Natural killer cell (primary cell): ENCODE measurements at regions of chr4 and their contacts with region 1.

Region 1: DNA sequence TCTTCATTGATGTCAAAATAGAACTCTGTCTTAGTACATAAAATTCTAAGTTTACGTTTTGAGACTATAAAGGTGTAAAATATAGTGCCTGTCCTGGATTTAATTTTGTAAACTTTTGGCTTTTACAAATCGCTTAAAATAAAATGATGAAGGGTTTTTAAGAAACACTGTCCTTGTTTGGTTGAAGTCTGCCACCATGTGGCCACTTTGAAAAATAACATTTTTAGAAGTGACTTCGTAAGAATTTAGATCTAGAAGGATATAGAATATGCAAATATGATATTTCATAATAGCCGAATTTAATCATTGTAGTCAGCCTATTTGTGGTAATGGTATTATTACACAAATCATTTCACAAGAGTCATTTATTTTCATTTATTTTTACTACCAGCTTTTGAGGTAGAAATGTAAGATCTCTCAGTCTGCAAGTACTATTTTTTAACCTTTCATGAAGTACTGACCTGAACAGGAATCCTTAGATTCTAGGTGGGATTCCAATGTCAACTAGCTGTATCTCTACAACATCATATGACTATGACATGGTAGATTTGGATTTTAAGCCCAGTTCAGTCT is 31.0 kb upstream of the FAT4 start:
- DNase-seq: peak in 1 of 2 donors; percentile 5
- ATAC-seq: no peak
- H3K4me3 ChIP-seq: no peak overlapping the region
- H3K4me3 Mint-ChIP-seq: no peak overlapping the region
- H3K27ac ChIP-seq: no peak overlapping the region
- H3K27ac Mint-ChIP-seq: no peak overlapping the region
- H3K4me1 ChIP-seq: no peaks in the 10 kb centered on the region
- H3K4me1 Mint-ChIP-seq: no peaks in the 10 kb centered on the region
- H3K27me3 ChIP-seq: no peaks in the 10 kb centered on the region
- H3K27me3 Mint-ChIP-seq: no peaks in the 10 kb centered on the region
- CTCF ChIP-seq: peak; percentile 68

Region 2: GRCh38 chr4:124334119-124334518 is 949.7 kb before region 1 on chr4:
- intact Hi-C with region 1: loop called (anchors 5 kb)
- DNase-seq: peak in 1 of 2 donors; percentile 9
- ATAC-seq: no peak
- H3K4me3 ChIP-seq: no peak overlapping the region
- H3K4me3 Mint-ChIP-seq: no peak overlapping the region
- H3K27ac ChIP-seq: no peak overlapping the region
- H3K27ac Mint-ChIP-seq: no peak overlapping the region
- H3K4me1 ChIP-seq: no peaks in the 10 kb centered on the region
- H3K4me1 Mint-ChIP-seq: no peaks in the 10 kb centered on the region
- H3K27me3 ChIP-seq: no peaks in the 10 kb centered on the region
- H3K27me3 Mint-ChIP-seq: no peaks in the 10 kb centered on the region
- CTCF ChIP-seq: no peak

Region 3: GRCh38 chr4:125303058-125303457 is 19.3 kb after region 1 on chr4:
- intact Hi-C with region 1: no loop called
- DNase-seq: no peak
- ATAC-seq: no peak
- H3K4me3 ChIP-seq: no peak overlapping the region
- H3K4me3 Mint-ChIP-seq: no peak overlapping the region
- H3K27ac ChIP-seq: no peak overlapping the region
- H3K27ac Mint-ChIP-seq: no peak overlapping the region
- H3K4me1 ChIP-seq: no peaks in the 10 kb centered on the region
- H3K4me1 Mint-ChIP-seq: no peaks in the 10 kb centered on the region
- H3K27me3 ChIP-seq: no peaks in the 10 kb centered on the region
- H3K27me3 Mint-ChIP-seq: peaks cover 0 to 24% of the 10 kb centered on the region in 2 donors
- CTCF ChIP-seq: no peak

Region 4: DNA sequence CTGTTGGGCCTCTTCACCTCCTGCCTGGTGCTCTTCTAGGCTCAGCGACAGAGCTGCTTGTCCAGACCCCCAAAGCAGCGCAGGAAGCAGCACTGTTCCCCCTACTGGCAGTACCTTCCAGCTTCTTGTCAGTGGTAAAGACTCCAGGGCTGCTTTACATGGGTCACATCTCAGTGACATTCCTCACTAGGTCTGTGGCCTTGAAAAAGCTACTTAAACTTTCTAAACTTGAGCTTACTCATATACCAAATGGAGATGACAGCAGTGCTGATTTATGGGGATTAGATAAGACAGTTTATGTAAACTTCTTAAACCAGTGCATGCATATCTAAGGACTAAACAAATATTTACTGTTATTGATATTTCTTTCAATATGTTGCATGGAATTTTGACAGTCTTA is 148.3 kb after region 1 on chr4:
- intact Hi-C with region 1: no loop called
- DNase-seq: no peak
- ATAC-seq: no peak
- H3K4me3 ChIP-seq: no peak overlapping the region
- H3K4me3 Mint-ChIP-seq: no peak overlapping the region
- H3K27ac ChIP-seq: no peak overlapping the region
- H3K27ac Mint-ChIP-seq: no peak overlapping the region
- H3K4me1 ChIP-seq: no peaks in the 10 kb centered on the region
- H3K4me1 Mint-ChIP-seq: no peaks in the 10 kb centered on the region
- H3K27me3 ChIP-seq: no peaks in the 10 kb centered on the region
- H3K27me3 Mint-ChIP-seq: no peaks in the 10 kb centered on the region
- CTCF ChIP-seq: no peak